ENCODE measurements at regions of chr10 and their contacts with region 1.

Region 1: DNA sequence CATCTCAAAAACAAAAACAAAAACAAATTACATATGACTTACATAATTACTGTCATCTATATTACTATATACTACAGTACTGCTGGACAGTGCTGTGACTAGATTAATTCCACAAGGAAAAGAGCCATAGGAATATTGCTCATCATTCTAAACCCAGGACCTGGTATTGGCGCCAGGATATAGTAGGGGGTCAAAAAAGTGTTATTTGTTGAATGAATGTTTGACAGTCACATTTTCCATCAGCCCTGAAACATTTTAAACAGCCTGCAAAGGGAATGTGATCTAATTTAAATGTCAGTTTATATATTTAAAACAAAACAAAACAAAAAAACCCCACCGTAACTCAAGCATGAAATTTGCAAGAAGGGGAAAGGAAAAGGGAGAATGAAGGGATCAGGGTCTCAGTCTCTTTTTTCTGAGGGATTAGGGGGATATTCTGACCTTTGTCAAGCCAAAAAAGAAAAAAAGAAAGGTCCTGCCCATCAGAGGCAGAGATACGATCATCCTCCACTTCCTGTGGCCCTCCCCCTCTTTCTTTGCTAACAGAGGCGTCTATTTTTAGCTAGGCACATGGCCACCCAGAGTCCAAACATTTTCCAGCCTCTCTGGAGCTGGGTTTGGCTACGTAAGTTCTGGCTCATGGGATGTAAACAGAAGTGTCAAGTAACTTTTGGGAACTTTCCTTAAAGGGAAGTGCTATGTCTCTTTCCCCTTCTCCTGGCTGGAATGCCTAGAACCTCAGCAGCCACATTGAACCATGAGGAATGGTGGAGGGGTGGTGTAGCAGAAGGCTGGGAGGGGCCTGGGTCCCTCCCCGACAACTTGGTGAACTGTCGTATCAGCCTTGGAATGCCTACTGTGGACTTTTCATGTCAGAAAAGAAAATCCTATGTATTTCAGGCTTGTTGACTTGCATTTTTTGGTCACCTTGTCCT is 44.6 kb upstream of the DLG5 start:
- DNase-seq: no peak
- H3K4me3 Mint-ChIP-seq: no peak overlapping the region
- H3K27ac Mint-ChIP-seq: no peak overlapping the region
- H3K4me1 Mint-ChIP-seq: no peaks in the 10 kb centered on the region
- H3K27me3 Mint-ChIP-seq: no peaks in the 10 kb centered on the region
- CTCF ChIP-seq: no peak

Region 2: GRCh38 chr10:77926566-77927401 is 44.4 kb before region 1 on chr10 and contains the start of gene DLG5:
- CTCF ChIA-PET with region 1: interaction called, 4 read pairs
- intact Hi-C with region 1: loop called (anchors 5 kb)
- DNase-seq: peak; percentile 69
- H3K4me3 Mint-ChIP-seq: peak within 1 kb of the TSS; percentile 81
- H3K27ac Mint-ChIP-seq: peak within 1 kb of the TSS; percentile 54
- H3K4me1 Mint-ChIP-seq: peaks cover 19% of the 10 kb centered on the region
- H3K27me3 Mint-ChIP-seq: peaks cover 26% of the 10 kb centered on the region
- CTCF ChIP-seq: peak; percentile 15
- total RNA-seq, gene DLG5: 46.0 and 51.0 TPM in 2 replicates

Region 3: DNA sequence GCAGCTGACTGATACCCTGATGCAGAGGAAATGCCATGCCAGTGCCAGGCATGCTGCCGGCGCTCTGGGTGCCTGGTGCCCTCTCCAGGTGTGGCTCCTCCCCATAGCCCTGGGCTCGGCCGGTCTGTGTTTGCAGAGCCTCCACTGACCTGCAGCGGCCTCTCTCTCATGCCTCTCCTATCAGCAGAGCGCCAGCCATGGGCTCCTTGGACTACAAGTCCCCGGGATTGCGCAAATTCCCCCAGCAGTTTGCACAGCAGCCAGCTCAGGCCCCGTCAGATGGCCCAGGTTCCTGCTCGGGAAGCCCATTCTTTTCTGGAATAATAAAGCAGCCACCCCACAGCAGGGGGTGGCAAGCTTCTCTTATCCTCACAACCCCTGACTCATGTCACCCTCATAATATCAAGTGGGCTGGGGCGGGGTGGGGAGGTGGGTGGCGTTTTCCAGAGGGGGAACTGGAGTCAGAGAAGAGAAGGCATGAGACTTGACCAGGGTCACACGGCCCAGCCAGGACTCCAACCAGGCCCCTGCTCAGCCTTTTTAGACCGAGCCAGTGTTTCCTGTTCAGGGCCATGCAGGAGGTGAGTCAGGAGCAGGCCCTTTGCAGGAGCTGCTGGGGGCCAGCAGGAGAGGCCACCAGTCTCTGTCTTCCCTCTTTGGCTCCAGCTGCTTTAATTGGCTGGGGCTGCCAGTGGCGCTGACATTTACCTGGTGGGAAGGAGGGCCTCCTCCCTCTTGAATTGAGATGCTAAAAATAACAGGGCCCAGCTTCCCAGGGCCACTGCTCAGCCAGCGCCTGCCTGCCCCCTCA is 1156.2 kb after region 1 on chr10:
- CTCF ChIA-PET with region 1: no interaction called
- intact Hi-C with region 1: no loop called
- DNase-seq: peak; percentile 91
- H3K4me3 Mint-ChIP-seq: peak overlapping the region; percentile 7
- H3K27ac Mint-ChIP-seq: peak overlapping the region; percentile 10
- H3K4me1 Mint-ChIP-seq: peaks cover 42% of the 10 kb centered on the region
- H3K27me3 Mint-ChIP-seq: no peaks in the 10 kb centered on the region
- CTCF ChIP-seq: no peak